ENCODE measurements at regions of chr16 and their contacts with region 1.

Region 1: DNA sequence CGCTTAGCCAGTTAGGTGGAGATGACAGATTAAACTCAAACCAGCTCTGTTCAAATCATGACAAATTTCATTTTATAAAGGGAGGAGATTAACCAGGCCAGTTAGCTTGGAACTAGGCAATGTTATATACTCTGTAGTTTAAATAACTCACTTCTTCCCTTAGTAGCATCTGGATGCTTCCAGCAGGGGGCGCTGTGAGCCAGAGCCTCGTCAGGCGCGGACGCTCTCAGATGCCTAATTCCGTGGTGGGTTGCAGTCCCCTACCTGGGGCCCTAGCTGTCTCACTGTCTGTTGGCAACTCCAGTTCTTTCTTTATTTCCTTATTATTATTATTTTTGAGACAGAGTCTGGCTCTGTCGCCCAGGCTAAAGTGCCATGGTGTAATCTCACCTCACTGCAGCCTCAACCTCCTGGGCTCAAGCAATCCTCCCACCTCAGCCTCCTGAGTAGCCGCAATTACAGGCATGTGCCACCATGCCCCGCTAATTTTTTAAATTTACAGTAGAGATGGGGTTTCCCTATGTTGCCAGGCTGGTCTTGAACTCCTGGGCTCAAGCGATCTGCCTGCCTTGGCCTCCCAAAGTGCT is 17.3 kb upstream of the WFDC1 start:
- DNase-seq: no peak
- H3K4me3 ChIP-seq: no peak overlapping the region
- CTCF ChIP-seq: peak; percentile 84

Region 2: GRCh38 chr16:84246683-84247082 is 30.6 kb before region 1 on chr16:
- CTCF ChIA-PET with region 1: interaction called, 21 read pairs
- POLR2A ChIA-PET with region 1: no interaction called
- DNase-seq: no peak
- H3K4me3 ChIP-seq: no peak overlapping the region
- CTCF ChIP-seq: no peak

Region 3: GRCh38 chr16:84299734-84300334 is 22.5 kb after region 1 on chr16:
- CTCF ChIA-PET with region 1: interaction called, 13 read pairs
- POLR2A ChIA-PET with region 1: no interaction called
- DNase-seq: no peak
- H3K4me3 ChIP-seq: no peak overlapping the region
- CTCF ChIP-seq: no peak

Region 4: DNA sequence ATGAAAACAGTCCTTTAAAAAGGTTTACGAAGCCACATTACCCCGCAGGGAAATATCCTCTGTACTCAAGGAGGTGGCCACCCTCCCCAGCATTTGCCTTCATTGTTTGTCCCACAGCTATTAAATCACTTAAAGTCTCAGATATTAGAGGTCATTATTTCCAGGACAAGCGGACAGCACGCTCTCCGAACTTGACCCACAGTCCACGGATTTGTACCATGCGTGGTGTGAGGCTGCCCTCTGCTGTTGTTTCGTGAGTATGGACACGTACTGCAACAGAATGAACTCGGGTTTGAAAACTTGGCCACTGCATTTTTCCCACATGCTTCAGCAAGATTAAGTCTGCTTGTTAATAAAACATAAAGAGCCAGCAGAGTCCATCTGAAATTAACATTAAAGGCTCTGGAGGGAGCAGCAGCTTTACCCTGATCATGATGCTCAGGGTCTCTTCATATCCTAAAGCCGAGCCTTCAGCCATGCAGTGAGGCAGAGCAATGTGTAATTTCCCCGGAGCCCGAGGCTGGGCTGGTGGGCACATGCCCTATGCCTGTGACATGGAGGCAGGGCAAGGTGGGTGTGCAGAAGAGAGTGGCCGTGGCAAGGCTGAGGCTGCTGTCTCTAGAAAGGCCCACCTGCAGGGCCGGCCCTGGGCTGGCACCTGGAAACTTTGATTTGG is 207.4 kb after region 1 on chr16:
- CTCF ChIA-PET with region 1: interaction called, 66 read pairs
- POLR2A ChIA-PET with region 1: no interaction called
- DNase-seq: no peak
- H3K4me3 ChIP-seq: no peak overlapping the region
- CTCF ChIP-seq: peak; percentile 67

Region 5: DNA sequence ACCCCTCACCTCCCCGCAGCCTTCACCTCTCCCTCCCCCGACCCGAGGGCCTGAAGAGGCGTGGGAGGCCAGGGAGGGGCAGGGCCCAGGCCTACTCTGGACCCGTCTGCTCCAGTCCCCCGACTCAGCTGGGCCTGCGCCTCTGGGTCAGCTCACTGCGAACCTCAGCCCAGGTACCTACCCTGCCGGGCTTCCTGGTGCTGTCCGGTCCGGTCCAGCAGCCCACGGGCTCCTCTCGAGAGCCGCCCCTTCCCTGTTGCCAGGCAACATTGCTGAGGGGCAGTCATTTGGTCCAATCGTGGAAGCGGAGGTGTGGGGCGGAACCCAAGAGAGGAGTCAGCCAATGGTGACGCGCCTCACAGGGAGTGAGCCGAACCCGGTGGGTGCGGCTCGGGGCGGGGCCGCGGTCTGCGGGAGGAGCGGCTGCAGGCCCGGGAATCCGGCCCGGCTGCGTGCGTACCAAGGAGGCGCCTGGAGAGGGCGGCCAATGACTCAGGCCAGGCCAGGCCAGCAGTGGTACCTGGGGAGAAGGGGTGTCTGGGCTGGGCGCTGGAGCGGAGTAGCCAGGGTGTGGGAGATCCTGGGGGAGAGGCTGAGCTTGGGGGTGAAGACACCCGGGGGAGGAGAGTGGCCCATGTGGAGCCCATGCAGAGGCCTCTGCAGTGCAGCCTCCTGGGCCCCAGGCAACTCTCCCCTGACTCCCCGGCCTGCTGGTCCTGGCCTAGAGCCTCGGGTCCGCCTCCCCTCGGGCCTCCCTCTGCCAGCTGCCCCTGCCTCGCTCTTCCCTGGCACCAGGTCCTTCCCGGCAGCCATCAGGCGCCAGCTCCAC is 227.3 kb after region 1 on chr16 and contains the start of gene MEAK7:
- CTCF ChIA-PET with region 1: interaction called, 45 read pairs
- POLR2A ChIA-PET with region 1: no interaction called
- DNase-seq: peak; percentile 77
- H3K4me3 ChIP-seq: peak within 1 kb of the TSS; percentile 100
- CTCF ChIP-seq: peak; percentile 39

Measured in AG04449 (cell line).